ENCODE measurements at regions of chr1 and their contacts with region 1.

Region 1: GRCh38 chr1:220089650-220090556 is at the start of gene BPNT1:
- DNase-seq: peak; percentile 93 to 96
- ATAC-seq: peak; percentile 83 to 89 (median 87)
- H3K4me3 ChIP-seq: peak within 1 kb of the TSS; percentile 77
- H3K27ac ChIP-seq: peak within 1 kb of the TSS; percentile 70
- H3K4me1 ChIP-seq: peaks cover 2% of the 10 kb centered on the region
- H3K27me3 ChIP-seq: no peaks in the 10 kb centered on the region
- CTCF ChIP-seq: no peak
- total RNA-seq, gene BPNT1: 5.8 to 12.1 (median 7.2) TPM

Region 2: GRCh38 chr1:220046052-220046930 is 43.6 kb before region 1 on chr1 and contains the start of gene EPRS1:
- intact Hi-C with region 1: loop called in 1 of 2 experiments (anchors 5 kb)
- DNase-seq: peak; percentile 94 to 97
- ATAC-seq: peak; percentile 99 to 100 (median 100)
- H3K4me3 ChIP-seq: peak within 1 kb of the TSS; percentile 83
- H3K27ac ChIP-seq: peak within 1 kb of the TSS; percentile 84
- H3K4me1 ChIP-seq: peaks cover 16% of the 10 kb centered on the region
- H3K27me3 ChIP-seq: no peaks in the 10 kb centered on the region
- CTCF ChIP-seq: peak; percentile 79
- total RNA-seq, gene EPRS1: 79.5 to 118 (median 83.7) TPM

Measured in psoas muscle (tissue), 8 donors.